Activated T-helper 2 cell treated with anti-CD3 and anti-CD28 coated beads, Interferon-gamma antibody, Interleukin-2, Interleukin-4, amounts not matched to agents 10 μg/mL and 5 μg/mL and 100 μg/mL, durations not matched to agents 14 hours and 24 hours and 36 hours (primary cell): ENCODE measurements at regions of chr4 and their contacts with region 1.

Region 1: DNA sequence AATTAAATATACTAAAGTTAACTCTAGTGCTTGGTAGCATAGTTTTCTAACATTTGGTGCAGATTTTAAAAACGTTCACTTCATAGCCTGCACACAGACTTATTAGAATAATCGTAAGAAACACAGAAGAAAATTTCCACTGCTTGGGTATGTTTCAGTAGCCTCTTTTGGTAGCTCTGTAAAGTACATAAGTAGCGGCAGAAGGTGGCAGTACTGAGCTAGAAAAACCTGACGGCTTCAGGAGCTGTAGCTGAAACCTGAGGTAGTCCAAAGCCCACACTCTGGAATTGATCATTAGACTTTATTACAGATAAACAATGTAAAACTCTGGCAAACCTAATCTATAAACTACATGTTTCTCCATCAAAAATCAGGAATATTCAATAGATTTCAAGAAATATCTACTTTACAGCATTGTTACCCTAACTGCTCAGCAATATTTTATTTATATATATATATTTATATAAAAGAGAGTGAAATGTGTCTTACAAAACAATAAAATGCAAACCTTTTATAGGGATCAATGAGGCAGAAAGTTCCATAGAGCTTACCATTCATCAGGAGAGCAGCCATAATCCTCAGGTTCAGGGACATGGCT is 88.2 kb downstream of the ATP8A1 start:
- DNase-seq: peak; percentile 26
- H3K4me3 Mint-ChIP-seq: no peak overlapping the region
- H3K27ac Mint-ChIP-seq: no peak overlapping the region
- H3K4me1 Mint-ChIP-seq: no peaks in the 10 kb centered on the region
- H3K27me3 Mint-ChIP-seq: no peaks in the 10 kb centered on the region

Region 2: DNA sequence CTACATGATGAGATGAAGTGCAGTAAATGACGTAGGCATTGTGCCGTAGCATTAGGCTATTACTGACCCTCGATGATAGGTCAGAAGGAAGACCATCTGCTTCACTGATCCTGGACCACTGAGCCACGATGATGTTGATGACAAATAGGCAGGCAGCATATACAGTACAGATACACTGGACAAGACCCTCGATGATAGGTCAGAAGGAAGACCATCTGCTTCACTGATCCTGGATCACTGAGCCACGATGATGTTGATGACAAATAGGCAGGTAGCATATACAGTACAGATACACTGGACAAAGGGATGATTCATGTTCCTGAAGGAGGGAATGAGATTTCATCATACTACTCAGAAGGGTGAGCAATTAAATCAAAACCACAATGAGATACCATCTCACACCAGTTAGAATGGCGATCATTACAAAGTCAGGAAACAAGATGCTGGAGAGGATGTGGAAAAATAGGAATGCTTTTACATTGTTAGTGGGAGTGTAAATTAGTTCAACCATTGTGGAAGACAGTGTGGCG is 467.2 kb before region 1 on chr4:
- intact Hi-C with region 1: no loop called
- DNase-seq: no peak
- H3K4me3 Mint-ChIP-seq: no peak overlapping the region
- H3K27ac Mint-ChIP-seq: no peak overlapping the region
- H3K4me1 Mint-ChIP-seq: no peaks in the 10 kb centered on the region
- H3K27me3 Mint-ChIP-seq: peaks cover 4% of the 10 kb centered on the region

Region 3: DNA sequence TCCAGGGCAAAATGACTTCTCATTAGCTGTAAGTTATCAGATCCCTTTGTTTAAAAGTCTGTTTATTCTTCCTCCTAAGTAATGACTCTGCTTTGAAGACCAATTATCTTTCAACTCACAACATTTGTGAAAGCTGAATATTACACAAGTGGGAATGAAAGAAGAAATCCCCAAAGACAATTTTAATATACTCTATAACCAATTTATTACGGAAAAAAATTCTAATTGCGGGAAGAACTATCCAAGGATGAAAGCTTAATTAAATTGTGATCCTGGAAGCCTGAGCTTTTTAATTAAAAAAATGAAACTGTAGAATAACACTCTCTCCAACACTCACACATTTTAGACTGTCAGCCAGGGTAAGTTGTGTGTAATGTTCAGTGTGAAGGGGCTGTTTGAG is 187.0 kb before region 1 on chr4:
- intact Hi-C with region 1: no loop called
- DNase-seq: no peak
- H3K4me3 Mint-ChIP-seq: no peak overlapping the region
- H3K27ac Mint-ChIP-seq: no peak overlapping the region
- H3K4me1 Mint-ChIP-seq: no peaks in the 10 kb centered on the region
- H3K27me3 Mint-ChIP-seq: peaks cover 18% of the 10 kb centered on the region

Region 4: DNA sequence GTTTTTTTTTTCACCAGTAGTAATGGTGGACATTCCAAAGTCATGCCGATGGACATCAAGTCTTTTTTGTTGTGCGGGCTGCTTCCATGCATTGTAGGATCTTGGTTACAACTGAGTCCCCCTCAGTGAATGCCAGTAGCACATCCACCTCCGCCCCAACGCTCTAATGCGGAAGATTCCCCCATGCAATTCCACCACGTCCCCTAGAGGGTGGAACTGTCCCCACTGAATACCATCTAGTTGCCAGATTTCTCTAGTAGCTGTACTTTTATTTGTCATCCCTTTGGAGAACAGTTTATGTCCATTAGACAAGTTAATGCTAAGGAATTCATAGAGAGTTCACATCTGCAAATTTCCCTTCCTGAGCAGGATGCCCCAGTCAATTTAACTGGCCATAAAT is 164.7 kb before region 1 on chr4:
- intact Hi-C with region 1: no loop called
- DNase-seq: no peak
- H3K4me3 Mint-ChIP-seq: no peak overlapping the region
- H3K27ac Mint-ChIP-seq: no peak overlapping the region
- H3K4me1 Mint-ChIP-seq: peaks cover 2% of the 10 kb centered on the region
- H3K27me3 Mint-ChIP-seq: peaks cover 33% of the 10 kb centered on the region

Region 5: GRCh38 chr4:42750091-42750490 is 181.4 kb after region 1 on chr4:
- intact Hi-C with region 1: loop called (anchors 1 kb)
- DNase-seq: no peak
- H3K4me3 Mint-ChIP-seq: no peak overlapping the region
- H3K27ac Mint-ChIP-seq: no peak overlapping the region
- H3K4me1 Mint-ChIP-seq: no peaks in the 10 kb centered on the region
- H3K27me3 Mint-ChIP-seq: peaks cover 1% of the 10 kb centered on the region

Region 6: GRCh38 chr4:42768125-42768748 is 199.5 kb after region 1 on chr4:
- intact Hi-C with region 1: loop called (anchors 5 kb)
- DNase-seq: no peak
- H3K4me3 Mint-ChIP-seq: no peak overlapping the region
- H3K27ac Mint-ChIP-seq: no peak overlapping the region
- H3K4me1 Mint-ChIP-seq: no peaks in the 10 kb centered on the region
- H3K27me3 Mint-ChIP-seq: no peaks in the 10 kb centered on the region

Region 7: GRCh38 chr4:42865572-42866189 is 297.0 kb after region 1 on chr4:
- intact Hi-C with region 1: loop called (anchors 1 kb)
- DNase-seq: peak; percentile 21
- H3K4me3 Mint-ChIP-seq: no peak overlapping the region
- H3K27ac Mint-ChIP-seq: no peak overlapping the region
- H3K4me1 Mint-ChIP-seq: no peaks in the 10 kb centered on the region
- H3K27me3 Mint-ChIP-seq: no peaks in the 10 kb centered on the region